Adrenal gland (tissue), 19 donors: ENCODE measurements at regions of chr3 and their contacts with region 1.

Region 1: DNA sequence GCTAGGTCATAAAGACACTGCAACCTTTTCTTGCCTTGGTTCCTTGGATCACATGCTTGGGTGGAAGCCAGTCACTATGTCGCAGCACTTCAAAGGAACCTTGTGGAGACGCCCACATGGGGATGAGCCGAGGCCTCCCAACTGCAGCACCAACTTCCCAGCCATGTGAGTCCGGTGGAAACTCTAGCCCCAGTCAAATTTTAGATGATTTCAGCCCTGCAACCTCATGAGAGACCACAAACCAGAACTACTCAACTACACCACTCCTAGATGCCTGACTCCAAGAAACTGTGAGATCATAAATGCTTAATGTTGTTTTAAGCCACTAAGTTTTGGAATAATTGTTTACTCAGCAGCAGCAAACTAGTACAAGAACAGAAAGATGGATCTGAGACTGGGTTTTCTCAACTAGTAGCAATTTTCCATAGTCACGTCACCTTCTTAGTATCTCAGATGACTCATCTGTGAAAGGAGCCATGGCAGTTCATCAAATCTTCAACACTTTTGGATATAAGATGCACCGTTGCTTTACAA is 86.5 kb downstream of the MB21D2 start:
- DNase-seq: peak in 4 of 7 donors; percentile 38 to 57 (median 50)
- H3K4me3 ChIP-seq: no peak overlapping the region
- H3K27ac ChIP-seq: peak overlapping the region in 1 of 5 donors; percentile 11
- H3K4me1 ChIP-seq: peaks cover 10 to 37% of the 10 kb centered on the region in 2 donors
- H3K27me3 ChIP-seq: no peaks in the 10 kb centered on the region
- CTCF ChIP-seq: no peak
- POLR2A ChIP-seq: no peak

Region 2: GRCh38 chr3:192706272-192706671 is 124.9 kb before region 1 on chr3:
- intact Hi-C with region 1: no loop called
- DNase-seq: no peak
- H3K4me3 ChIP-seq: no peak overlapping the region
- H3K27ac ChIP-seq: no peak overlapping the region
- H3K4me1 ChIP-seq: no peaks in the 10 kb centered on the region
- H3K27me3 ChIP-seq: no peaks in the 10 kb centered on the region
- CTCF ChIP-seq: no peak
- POLR2A ChIP-seq: no peak

Region 3: DNA sequence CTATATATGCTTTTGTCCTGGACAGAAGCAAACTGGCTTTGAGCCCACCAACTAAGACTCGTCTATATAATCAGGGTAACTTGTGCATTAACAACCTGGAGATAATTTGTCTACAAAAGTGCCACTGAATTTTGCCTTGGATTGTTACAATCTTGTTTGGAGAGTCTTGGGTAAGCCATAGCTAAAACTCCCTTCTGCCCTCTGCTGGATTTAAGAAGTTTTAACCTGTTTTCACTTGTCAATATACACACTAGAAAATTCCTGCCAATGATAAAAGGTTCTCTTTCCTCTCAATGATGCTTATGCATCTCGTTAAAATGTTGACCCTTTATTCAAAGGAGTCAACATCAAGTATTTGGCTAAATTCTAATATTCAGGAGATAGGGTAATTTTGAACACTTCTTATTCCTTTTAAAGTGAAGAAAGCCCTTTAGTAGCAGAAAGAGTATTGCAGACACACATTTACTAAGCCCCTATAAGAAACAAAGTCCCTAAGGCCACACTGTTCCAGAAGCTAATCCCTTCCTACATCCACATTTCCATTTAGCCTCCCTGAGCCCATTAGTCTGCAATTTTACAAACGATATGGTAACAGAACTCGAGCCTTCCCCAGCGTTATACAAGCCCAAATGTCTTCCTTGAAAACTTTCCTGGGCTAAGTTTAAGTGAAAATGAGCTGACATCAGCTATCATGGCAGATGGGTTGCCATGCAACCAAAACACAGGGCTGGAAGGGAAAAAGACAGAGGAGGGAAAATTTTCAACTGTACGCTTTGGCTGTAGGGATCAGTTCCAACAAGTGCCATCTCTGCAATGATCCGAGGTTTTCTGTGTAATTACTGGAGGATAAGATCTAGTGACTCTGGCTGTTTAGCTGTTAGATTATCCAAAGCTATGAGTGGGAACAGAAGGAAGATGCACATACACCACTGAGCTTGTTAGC is 27.9 kb before region 1 on chr3:
- intact Hi-C with region 1: no loop called
- DNase-seq: no peak
- H3K4me3 ChIP-seq: no peak overlapping the region
- H3K27ac ChIP-seq: no peak overlapping the region
- H3K4me1 ChIP-seq: no peaks in the 10 kb centered on the region
- H3K27me3 ChIP-seq: no peaks in the 10 kb centered on the region
- CTCF ChIP-seq: peak; percentile 46 to 63 (median 54)
- POLR2A ChIP-seq: no peak

Region 4: DNA sequence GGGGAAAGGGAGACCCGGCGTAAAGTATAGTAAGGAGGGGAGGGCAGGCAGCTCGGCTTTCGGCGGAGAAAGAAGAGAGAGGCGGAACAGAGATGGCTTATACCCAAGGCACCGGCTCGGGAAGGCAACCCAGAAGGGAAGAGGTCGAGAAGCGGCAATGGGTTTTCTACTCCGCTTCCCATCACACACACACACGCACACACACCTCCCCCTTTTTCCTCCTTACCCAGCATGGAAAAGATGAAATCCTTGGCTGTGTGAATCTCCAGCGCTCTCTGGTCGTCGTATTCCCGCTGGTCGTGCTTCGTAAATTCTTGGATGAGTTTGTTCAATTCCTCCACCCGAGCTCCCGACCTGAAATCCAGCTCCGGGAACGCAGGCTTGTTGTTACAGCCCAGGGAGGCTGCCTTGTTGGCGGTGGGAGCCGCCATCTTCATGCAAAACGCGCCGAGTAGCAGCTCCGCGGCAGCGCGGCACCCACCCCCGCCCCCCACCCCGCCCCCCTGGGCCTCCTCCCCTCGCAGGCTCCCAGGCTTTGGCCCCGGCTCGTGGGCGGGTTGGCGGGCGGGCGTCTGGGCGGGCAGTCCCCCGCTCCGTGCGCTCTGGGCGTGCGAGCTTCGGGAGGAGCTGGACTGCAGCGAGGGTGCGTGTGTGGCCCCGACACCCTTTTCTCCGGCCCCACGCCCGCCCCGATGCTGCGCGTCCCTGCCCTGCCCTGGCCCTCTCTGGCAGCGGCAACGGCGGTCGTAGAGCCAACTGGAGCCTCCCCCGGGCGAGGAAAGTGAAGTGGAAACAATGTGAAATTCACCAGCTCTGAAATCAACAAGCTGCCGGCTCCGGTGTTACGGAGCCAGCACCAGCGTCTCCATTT is 86.5 kb after region 1 on chr3 and contains the start of gene MB21D2:
- intact Hi-C with region 1: loop called in 1 of 2 experiments (anchors 10 kb)
- DNase-seq: peak; percentile 73 to 83 (median 75)
- H3K4me3 ChIP-seq: peak within 1 kb of the TSS in 3 of 4 donors; percentile 54 to 91 (median 75)
- H3K27ac ChIP-seq: peak within 1 kb of the TSS; percentile 41 to 93 (median 90)
- H3K4me1 ChIP-seq: peaks cover 0 to 20% of the 10 kb centered on the region in 2 donors
- H3K27me3 ChIP-seq: no peaks in the 10 kb centered on the region
- CTCF ChIP-seq: peak in 2 of 6 experiments; percentile 33 to 35
- POLR2A ChIP-seq: peak; percentile 64 to 82
- total RNA-seq, gene MB21D2: 1.9 to 16.8 (median 6.0) TPM